PC-3 (cell line): ENCODE measurements at regions of chr2 and their contacts with region 1.

Region 1: DNA sequence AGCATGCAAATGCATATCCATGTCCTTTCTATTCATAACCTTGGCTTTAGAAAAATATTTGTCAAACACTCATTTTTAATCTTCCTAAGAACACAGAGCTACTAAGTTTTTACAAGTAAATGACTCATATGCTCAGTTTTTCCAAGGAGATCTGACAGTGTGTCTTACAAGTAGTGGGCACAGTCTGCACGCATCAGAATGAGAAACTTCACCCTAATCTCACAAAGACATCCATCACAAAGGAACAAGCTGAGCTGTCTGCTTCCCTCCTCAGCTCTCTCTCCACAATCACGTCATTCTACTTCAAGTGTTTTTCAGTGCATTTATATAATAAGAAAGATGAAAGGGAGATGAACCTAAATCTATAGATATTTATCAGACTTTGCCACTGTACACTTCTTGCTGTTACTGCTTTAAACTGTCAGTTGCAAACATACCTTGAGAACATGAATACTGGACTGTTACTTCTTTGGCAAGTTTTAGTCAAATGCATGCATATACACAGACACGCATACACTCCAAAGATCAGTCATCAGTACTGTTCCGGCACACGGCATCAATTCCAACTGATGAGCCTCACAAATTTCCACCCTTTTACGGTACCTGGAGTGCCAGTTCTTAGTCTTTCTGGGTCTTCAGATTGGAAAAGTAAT is 75.7 kb downstream of the RBMS1 start:
- DNase-seq: peak; percentile 90
- ATAC-seq: peak; percentile 76
- H3K4me3 ChIP-seq: peak overlapping the region; percentile 55
- H3K27ac ChIP-seq: peak overlapping the region; percentile 95
- H3K4me1 ChIP-seq: peaks cover 64% of the 10 kb centered on the region
- H3K27me3 ChIP-seq: no peaks in the 10 kb centered on the region
- CTCF ChIP-seq: no peak

Region 2: DNA sequence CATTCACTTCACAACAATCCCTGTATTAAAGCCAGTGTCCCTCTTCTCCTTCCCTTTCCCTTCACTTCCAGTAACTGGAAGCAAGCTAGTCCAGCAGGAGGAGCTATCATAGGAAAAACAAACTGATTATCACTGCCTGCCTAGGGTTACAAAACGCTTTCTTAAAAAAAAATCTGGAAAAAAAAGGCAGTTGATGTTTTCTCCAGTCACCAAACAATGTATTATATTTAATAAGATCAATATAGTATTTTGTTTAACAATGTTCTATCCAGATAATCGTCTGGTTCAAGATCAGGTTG is 139.0 kb before region 1 on chr2:
- CTCF ChIA-PET with region 1: no interaction called
- POLR2A ChIA-PET with region 1: no interaction called
- intact Hi-C with region 1: no loop called
- DNase-seq: peak; percentile 52
- ATAC-seq: peak; percentile 47; the same call in 1 of the 2 replicates
- H3K4me3 ChIP-seq: no peak overlapping the region
- H3K27ac ChIP-seq: no peak overlapping the region
- H3K4me1 ChIP-seq: peaks cover 14% of the 10 kb centered on the region
- H3K27me3 ChIP-seq: no peaks in the 10 kb centered on the region
- CTCF ChIP-seq: peak; percentile 65

Region 3: DNA sequence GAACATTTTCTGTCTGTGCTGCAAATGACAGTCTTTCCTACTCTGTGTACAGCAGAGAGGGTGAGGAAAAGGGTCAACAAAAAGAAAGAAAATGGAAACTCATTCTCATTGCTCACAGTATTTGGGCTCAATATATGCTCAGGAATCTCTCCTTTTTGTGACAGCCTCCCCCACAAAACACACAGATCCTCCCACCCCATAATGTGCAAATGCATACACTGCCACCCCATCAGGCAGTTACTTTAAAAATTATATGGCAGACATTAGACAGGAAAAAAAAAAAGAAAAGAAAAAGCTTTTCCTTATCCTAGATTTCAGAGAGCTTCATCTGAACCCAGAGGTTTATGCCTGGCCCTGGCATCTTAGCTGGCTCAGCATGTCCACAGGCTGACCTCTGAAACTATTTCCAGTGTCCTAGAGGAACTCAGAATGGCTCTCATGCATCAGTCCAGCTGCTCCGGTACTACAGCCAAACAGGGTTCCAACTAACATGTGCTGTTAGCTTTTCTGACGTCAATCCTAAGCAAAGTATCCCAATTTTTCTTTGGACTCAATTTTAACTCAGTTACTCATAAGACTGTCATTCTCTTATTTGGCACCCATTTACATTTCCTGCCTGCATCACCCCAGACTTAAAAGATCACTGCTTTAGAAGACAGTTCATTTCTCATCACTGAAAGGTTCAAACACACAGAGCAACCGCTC is 30.2 kb before region 1 on chr2:
- CTCF ChIA-PET with region 1: no interaction called
- POLR2A ChIA-PET with region 1: no interaction called
- intact Hi-C with region 1: no loop called
- DNase-seq: peak; percentile 90
- ATAC-seq: peak; percentile 77
- H3K4me3 ChIP-seq: no peak overlapping the region
- H3K27ac ChIP-seq: peak overlapping the region; percentile 88
- H3K4me1 ChIP-seq: peaks cover 60% of the 10 kb centered on the region
- H3K27me3 ChIP-seq: no peaks in the 10 kb centered on the region
- CTCF ChIP-seq: no peak

Region 4: DNA sequence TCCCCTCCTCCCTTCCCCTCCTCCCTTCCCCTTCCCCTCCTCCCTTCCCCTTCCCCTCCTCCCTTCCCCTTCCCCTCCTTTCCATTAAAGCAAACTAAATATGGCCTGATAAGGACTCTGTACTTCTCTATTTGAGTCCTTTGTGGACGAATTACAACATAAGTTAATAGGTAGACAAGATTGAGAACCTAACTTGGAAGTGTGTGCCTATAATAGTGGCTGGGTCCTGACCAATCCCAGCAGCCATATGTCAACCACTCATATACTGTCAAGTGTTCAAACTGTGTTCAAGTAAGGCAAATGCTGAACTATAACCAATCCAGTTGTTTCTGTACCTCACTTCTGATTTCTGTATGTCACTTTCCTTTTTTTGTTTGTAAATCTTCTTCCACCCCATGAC is 172.8 kb after region 1 on chr2:
- CTCF ChIA-PET with region 1: no interaction called
- POLR2A ChIA-PET with region 1: no interaction called
- intact Hi-C with region 1: loop called (anchors 5 kb)
- DNase-seq: no peak
- ATAC-seq: no peak
- H3K4me3 ChIP-seq: no peak overlapping the region
- H3K27ac ChIP-seq: no peak overlapping the region
- H3K4me1 ChIP-seq: no peaks in the 10 kb centered on the region
- H3K27me3 ChIP-seq: no peaks in the 10 kb centered on the region
- CTCF ChIP-seq: no peak

Region 5: DNA sequence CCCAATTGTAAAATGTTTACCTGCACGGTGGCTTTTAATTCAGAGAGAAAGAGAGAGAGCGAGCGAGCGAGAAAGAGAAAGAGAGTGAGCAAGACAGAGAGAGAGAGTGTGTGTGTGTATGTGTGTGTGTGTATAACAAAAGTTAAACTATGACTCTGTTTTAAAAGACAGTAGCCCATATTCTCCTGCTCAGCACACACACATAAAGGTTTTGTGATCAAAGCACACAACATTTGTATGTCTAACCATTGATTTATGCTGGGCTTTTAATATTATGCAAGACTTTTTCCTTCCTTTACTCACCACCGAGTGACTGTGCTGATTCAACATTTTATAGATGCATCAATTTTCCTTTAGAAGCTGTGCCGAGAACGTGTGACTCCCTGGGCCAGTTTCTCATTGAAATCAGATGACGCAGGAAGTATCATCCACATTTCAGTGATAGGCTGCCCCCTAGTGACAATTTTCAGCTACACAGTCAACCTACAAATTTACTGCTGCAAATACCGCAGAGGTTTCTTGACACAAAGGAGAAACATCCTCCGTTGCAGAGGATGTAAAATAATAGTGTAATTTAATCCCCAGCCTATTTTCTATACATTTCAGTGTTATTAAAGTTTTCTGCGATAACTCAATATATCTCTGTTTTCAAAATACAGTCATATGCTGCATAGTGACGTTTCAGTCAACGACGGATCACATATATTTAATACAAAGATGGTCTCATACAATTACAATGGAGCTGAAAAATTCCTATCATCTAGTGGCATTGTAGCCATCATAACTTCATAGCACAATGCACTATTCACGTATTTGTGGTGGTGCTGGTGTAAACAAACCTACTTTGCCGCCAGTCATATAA is 576.5 kb after region 1 on chr2:
- CTCF ChIA-PET with region 1: no interaction called
- POLR2A ChIA-PET with region 1: no interaction called
- intact Hi-C with region 1: loop called (anchors 5 kb)
- DNase-seq: peak; percentile 92
- ATAC-seq: peak; percentile 89
- H3K4me3 ChIP-seq: no peak overlapping the region
- H3K27ac ChIP-seq: no peak overlapping the region
- H3K4me1 ChIP-seq: peaks cover 7% of the 10 kb centered on the region
- H3K27me3 ChIP-seq: no peaks in the 10 kb centered on the region
- CTCF ChIP-seq: peak; percentile 94